Right lobe of liver (tissue), 6 donors: ENCODE measurements at regions of chr16 and their contacts with region 1.

Region 1: GRCh38 chr16:87416826-87417527 is 24.8 kb downstream of the MAP1LC3B start:
- DNase-seq: no peak
- ATAC-seq: peak in 3 of 4 donors; percentile 23 to 38 (median 29)
- H3K4me3 ChIP-seq: no peak overlapping the region
- H3K27ac ChIP-seq: no peak overlapping the region
- H3K4me1 ChIP-seq: no peaks in the 10 kb centered on the region
- H3K27me3 ChIP-seq: no peaks in the 10 kb centered on the region
- CTCF ChIP-seq: peak; percentile 53 to 68 (median 63)
- POLR2A ChIP-seq: no peak

Region 2: GRCh38 chr16:87471278-87472141 is 54.5 kb after region 1 on chr16:
- intact Hi-C with region 1: no loop called
- DNase-seq: no peak
- ATAC-seq: peak; percentile 33 to 58 (median 41)
- H3K4me3 ChIP-seq: no peak overlapping the region
- H3K27ac ChIP-seq: peak overlapping the region; percentile 17 to 58 (median 24)
- H3K4me1 ChIP-seq: peaks cover 0 to 50% (median 17%) of the 10 kb centered on the region in 4 donors
- H3K27me3 ChIP-seq: no peaks in the 10 kb centered on the region
- CTCF ChIP-seq: no peak
- POLR2A ChIP-seq: no peak

Region 3: GRCh38 chr16:87531418-87531817 is 114.4 kb after region 1 on chr16:
- intact Hi-C with region 1: no loop called
- DNase-seq: no peak
- ATAC-seq: peak in 3 of 4 donors; percentile 8 to 36 (median 19)
- H3K4me3 ChIP-seq: no peak overlapping the region
- H3K27ac ChIP-seq: no peak overlapping the region
- H3K4me1 ChIP-seq: peaks cover 0 to 32% (median 15%) of the 10 kb centered on the region in 4 donors
- H3K27me3 ChIP-seq: no peaks in the 10 kb centered on the region
- CTCF ChIP-seq: no peak
- POLR2A ChIP-seq: no peak

Region 4: GRCh38 chr16:87560428-87561199 is 143.6 kb after region 1 on chr16:
- intact Hi-C with region 1: loop called in 1 of 2 experiments (anchors 10 kb)
- DNase-seq: no peak
- ATAC-seq: peak; percentile 9 to 66 (median 38)
- H3K4me3 ChIP-seq: no peak overlapping the region
- H3K27ac ChIP-seq: no peak overlapping the region
- H3K4me1 ChIP-seq: peaks cover 0 to 22% (median 8%) of the 10 kb centered on the region in 4 donors
- H3K27me3 ChIP-seq: no peaks in the 10 kb centered on the region
- CTCF ChIP-seq: no peak
- POLR2A ChIP-seq: no peak

Region 5: DNA sequence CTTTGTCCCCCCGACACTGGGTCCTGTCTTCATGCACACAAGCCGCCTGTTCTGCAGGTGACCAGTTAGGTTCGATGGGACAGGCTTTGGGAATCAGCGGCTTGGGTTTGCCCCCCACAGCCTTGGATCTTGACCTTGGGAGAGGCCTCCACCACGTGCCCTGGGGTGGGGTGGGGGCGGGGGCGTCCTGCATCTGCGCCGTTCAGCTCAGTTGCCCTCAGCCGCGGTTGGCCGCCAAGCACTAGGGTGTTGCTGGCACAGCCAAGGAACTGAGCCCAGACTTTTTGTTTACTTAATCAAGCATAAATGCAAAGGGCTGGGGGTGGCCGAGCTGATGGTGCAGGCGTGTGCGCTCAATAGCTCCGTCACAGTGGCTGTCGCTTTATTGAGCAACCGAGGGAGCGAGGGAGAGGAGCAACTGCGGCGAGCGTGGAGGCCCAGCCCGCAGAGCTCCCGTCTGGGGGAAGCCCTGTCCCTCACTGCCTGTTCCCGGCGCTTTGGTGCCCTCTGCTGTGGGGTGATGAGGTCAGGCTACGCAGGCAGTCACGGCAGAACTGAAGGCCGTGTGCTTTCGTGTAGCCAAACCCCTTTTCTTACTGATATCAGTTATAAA is 219.2 kb after region 1 on chr16:
- intact Hi-C with region 1: loop called (anchors 10 kb)
- DNase-seq: peak; percentile 88 to 92 (median 91)
- ATAC-seq: peak; percentile 96 to 99 (median 98)
- H3K4me3 ChIP-seq: no peak overlapping the region
- H3K27ac ChIP-seq: no peak overlapping the region
- H3K4me1 ChIP-seq: peaks cover 0 to 12% (median 5%) of the 10 kb centered on the region in 4 donors
- H3K27me3 ChIP-seq: no peaks in the 10 kb centered on the region
- CTCF ChIP-seq: peak; percentile 64 to 77 (median 72)
- POLR2A ChIP-seq: no peak